Pancreas (tissue), 10 donors: ENCODE measurements at regions of chr2 and their contacts with region 1.

Region 1: DNA sequence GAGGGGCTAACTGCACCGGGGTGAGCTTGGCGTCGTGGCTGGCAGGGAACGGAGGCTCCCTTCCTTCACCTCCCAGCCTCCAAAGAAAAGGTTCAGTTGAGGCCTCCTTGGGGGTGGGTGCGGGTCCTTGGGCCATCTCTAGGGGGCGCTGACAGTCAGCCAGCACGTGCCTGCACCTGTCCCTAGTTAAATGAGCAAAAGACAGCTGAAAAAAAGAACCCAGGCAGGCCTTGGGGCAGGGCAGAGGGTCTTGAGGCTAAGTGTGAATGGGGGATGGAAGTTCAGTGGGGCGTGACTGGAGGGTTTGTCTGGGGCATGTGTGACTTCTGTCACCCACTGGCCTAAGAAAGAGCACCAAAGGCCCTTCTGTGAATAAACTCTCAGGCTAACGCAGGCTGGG is 56.4 kb downstream of the ZFP36L2 start:
- DNase-seq: peak in 3 of 6 donors; percentile 53 to 73 (median 60)
- ATAC-seq: peak; percentile 29 to 64 (median 60)
- H3K4me3 ChIP-seq: no peak overlapping the region
- H3K27ac ChIP-seq: peak overlapping the region; percentile 51 to 78 (median 68)
- H3K4me1 ChIP-seq: peaks cover 0 to 20% (median 6%) of the 10 kb centered on the region in 3 donors
- H3K27me3 ChIP-seq: no peaks in the 10 kb centered on the region
- CTCF ChIP-seq: peak; percentile 36 to 66 (median 52)

Region 2: GRCh38 chr2:43075054-43075593 is 94.9 kb before region 1 on chr2:
- intact Hi-C with region 1: no loop called
- DNase-seq: peak in 4 of 6 donors; percentile 47 to 63 (median 52)
- ATAC-seq: peak; percentile 61 to 81 (median 77)
- H3K4me3 ChIP-seq: no peak overlapping the region
- H3K27ac ChIP-seq: peak overlapping the region in 3 of 4 donors; percentile 28 to 77 (median 66)
- H3K4me1 ChIP-seq: peaks cover 0 to 19% (median 0%) of the 10 kb centered on the region in 3 donors
- H3K27me3 ChIP-seq: no peaks in the 10 kb centered on the region
- CTCF ChIP-seq: no peak

Region 3: DNA sequence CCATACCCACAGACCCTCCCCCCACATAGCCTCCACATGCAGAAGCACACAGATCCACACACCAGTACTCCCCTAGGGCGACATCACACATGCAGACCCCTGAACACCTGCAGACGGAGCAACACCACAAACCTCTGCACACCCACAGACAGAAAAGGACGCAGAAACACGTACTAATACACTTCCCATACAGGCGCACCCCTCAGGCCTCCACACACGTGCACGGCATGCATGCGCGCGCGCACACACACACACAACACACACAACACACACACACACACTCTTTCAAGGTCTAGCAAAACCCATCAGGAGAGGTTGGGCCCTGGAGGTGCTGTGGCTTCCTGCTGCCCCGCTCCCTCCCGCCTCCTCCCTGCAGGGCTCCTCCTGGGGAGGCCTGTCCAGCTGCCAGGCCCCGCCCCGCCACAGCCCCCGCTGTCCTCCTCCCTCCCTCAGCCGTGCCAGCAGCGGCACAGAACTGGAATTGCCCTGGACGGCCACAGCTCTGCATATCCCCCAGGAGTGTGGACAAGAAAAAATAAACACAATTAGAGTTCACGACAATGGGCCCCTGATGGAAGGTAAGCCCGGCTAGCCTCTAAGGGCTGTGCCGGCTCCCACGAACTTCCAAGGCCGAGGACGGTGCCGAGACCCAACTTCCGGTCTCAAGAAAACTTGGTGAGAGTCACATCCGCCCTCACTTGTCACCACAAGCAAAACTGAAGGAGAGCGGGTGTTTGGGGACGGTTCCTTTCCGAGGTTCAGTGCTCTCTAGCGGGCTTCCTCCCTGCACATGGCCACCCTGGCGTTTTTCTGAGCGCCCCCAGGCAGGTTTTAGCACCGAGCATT is 49.6 kb after region 1 on chr2:
- intact Hi-C with region 1: loop called in 1 of 3 experiments (anchors 5 kb)
- DNase-seq: peak; percentile 86 to 95 (median 90)
- ATAC-seq: peak; percentile 67 to 83 (median 80)
- H3K4me3 ChIP-seq: peak overlapping the region; percentile 5 to 87 (median 16)
- H3K27ac ChIP-seq: peak overlapping the region; percentile 87 to 98 (median 96)
- H3K4me1 ChIP-seq: peaks cover 19 to 35% (median 27%) of the 10 kb centered on the region in 3 donors
- H3K27me3 ChIP-seq: no peaks in the 10 kb centered on the region
- CTCF ChIP-seq: no peak